ENCODE measurements at regions of chr9 and their contacts with region 1.

Region 1: DNA sequence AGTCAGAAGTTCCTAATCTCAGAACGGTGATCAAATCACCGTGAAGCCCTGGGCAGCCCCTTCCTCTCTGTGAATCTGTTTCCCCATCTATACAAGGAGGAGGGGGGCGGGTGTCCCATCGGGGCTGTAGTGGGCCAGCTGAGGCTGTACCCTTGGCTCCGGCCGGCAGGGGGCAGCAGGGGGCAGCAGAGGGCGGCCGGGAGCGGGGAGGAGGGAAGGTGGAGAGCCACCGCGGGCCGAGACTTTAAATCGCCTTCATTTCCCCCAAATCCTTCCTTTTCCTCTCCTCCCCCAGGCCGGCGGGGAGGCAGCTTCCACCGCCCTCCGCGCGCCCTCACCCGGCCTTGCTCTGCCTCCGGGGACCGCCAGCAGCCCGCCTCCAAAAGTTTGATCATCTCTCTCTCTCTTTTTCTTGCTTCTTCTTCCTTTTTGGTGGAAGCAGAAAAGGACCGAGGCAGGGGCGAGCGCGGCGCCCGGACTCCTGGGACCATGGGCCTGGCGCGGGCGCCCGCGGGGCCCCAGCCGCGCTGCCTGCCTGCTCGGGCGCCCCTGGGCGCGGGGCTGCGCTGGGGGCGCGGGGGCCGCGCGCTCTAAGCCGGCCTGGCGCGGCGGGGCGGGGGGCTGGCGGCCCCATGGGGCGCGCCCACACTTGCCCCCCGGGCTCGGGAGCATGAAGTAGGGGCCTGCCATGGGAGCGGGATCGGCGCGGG is at the start of gene COL27A1:
- DNase-seq: peak; percentile 82 to 95 (median 88)
- ATAC-seq: peak; percentile 92
- H3K4me3 ChIP-seq: peak within 1 kb of the TSS; percentile 47 to 48
- H3K27ac ChIP-seq: peak within 1 kb of the TSS; percentile 18 to 48
- H3K4me1 ChIP-seq: peaks cover 11 to 25% of the 10 kb centered on the region in 2 donors
- H3K27me3 ChIP-seq: peaks cover 12 to 70% of the 10 kb centered on the region in 2 donors
- CTCF ChIP-seq: peak; percentile 90 to 92
- polyA plus RNA-seq, gene COL27A1: 112 to 180 (median 168) TPM

Region 2: GRCh38 chr9:114282926-114283325 is 127.5 kb after region 1 on chr9:
- intact Hi-C with region 1: loop called in 1 of 2 experiments (anchors 10 kb)
- DNase-seq: peak in 1 of 4 donors; percentile 18
- ATAC-seq: no peak
- H3K4me3 ChIP-seq: no peak overlapping the region
- H3K27ac ChIP-seq: no peak overlapping the region
- H3K4me1 ChIP-seq: no peaks in the 10 kb centered on the region
- H3K27me3 ChIP-seq: peaks cover 0 to 5% of the 10 kb centered on the region in 2 donors
- CTCF ChIP-seq: no peak